ENCODE measurements at regions of chrX and their contacts with region 1.

Region 1: DNA sequence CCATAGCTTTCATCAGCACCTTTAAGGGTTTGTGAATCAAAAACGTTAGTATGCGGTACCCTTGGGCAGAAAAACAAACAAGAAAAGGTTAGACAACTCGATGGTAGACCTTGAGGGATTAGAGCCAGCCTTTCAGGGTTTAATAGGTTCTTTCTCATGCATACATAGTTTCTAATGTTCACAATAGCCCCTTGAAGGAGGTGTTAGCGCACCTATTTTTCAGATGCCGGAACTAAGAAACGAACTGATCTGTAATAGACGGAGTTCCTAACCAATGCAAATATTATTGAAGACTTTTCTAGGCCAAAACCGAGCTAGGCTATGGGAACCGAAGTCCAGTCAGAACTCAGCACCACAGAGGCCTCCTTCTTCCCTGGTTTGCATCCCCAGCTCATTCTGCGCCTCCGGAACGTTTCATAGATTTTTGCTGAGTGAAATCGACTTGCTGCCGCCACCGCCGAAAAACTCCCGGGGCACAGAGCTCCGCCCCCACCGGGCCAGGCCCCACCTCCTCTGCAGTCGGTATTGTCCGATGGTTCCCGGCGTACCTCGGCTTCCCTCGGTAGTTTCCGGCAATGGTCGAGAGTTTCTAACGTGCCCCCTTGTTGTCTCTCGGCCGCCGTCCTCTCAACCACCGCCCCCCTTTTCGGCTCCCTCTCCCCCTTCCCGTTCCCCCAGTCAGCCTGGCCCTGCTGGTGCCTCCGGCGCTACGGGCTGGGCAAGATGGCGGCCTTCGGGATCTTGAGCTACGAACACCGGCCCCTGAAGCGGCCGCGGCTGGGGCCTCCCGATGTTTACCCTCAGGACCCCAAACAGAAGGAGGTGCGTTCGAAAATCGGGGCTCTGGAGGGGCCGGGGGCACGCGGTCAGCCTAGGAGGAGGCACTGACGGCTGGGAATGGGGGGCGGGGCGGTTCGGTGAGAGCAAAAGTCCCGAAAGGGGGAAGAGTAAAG is at the start of gene MED12:
- DNase-seq: peak; percentile 91
- ATAC-seq: peak; percentile 98
- H3K4me3 Mint-ChIP-seq: peak within 1 kb of the TSS; percentile 79
- H3K27ac Mint-ChIP-seq: peak within 1 kb of the TSS; percentile 87
- H3K4me1 Mint-ChIP-seq: peaks cover 23% of the 10 kb centered on the region
- H3K27me3 Mint-ChIP-seq: no peaks in the 10 kb centered on the region
- total RNA-seq, gene MED12: 46.2 to 56.4 TPM

Region 2: GRCh38 chrX:70289793-70290776 is 828.2 kb before region 1 on chrX and contains the starts of genes KIF4A and PDZD11:
- CTCF ChIA-PET with region 1: no interaction called
- POLR2A ChIA-PET with region 1: no interaction called
- intact Hi-C with region 1: loop called in 1 of 2 experiments (anchors 2 kb)
- DNase-seq: peak; percentile 89
- ATAC-seq: peak; percentile 100
- H3K4me3 Mint-ChIP-seq: peak within 1 kb of the TSS; percentile 88
- H3K27ac Mint-ChIP-seq: peak within 1 kb of the TSS; percentile 82
- H3K4me1 Mint-ChIP-seq: peaks cover 18% of the 10 kb centered on the region
- H3K27me3 Mint-ChIP-seq: no peaks in the 10 kb centered on the region
- total RNA-seq, gene KIF4A: 21.2 to 25.4 TPM
- total RNA-seq, gene PDZD11: 23.6 to 28.0 TPM

Region 3: DNA sequence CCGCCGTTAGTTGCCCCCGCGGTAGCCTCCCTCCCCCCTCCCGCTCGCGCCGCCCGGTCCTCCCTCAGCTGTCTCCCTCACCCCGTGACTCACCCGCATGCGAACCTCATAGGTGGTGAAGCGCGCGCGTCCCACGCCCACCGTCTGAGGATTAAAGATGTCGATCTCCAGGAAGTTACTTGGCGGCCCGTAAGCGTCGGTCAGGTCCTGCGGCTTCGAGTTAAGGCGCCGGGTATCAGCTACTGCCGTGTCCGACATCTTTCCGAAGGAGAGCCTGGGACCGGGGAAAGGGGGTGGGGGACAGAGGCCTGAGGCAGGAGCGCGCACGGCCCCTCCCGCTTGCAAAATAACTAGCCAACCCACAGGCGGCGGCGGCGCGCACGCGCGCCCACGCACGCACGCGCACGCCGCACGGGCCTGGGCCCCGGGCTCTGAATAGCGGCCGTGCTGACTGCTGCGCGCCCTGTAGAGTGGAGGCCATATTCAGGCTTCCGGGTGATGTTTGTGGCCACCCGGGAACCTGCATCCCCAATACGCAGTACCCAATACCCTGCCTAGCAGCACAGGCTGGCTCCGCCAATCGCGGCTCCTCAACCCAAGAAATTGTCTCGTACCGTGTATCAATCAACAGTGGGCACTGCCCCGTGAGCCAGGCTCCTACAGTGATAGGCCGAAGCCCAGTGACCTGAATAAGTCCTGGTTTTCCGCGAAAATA is 50.1 kb before region 1 on chrX and contains the start of gene SNX12:
- CTCF ChIA-PET with region 1: no interaction called
- POLR2A ChIA-PET with region 1: interaction called, 6 read pairs
- intact Hi-C with region 1: loop called (anchors 1 to 5 kb)
- DNase-seq: peak; percentile 92
- ATAC-seq: peak; percentile 93
- H3K4me3 Mint-ChIP-seq: peak within 1 kb of the TSS; percentile 91
- H3K27ac Mint-ChIP-seq: peak within 1 kb of the TSS; percentile 93
- H3K4me1 Mint-ChIP-seq: peaks cover 17% of the 10 kb centered on the region
- H3K27me3 Mint-ChIP-seq: no peaks in the 10 kb centered on the region
- total RNA-seq, gene SNX12: 43.2 to 44.6 TPM

Region 4: DNA sequence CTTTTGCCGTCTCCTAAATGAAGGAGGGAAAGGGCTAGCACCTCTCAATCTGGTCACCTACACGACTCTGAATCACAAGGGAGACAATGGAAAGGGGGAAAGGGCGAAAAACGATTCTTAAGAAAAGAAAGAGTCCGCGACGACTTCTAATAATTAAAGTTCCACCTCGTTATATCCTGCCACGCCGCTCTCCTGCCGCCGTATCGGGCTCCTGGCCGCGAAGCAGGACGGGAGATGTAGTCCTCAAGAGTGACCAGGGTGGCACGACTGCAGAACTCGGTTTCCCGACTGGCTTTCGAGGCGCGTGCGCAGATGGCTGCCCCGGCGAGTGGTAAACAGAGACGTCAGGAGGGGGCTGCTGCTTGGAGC is 22.8 kb before region 1 on chrX and contains the start of gene FOXO4:
- CTCF ChIA-PET with region 1: interaction called, 10 read pairs
- POLR2A ChIA-PET with region 1: interaction called, 6 read pairs
- intact Hi-C with region 1: loop called in 1 of 2 experiments (anchors 1 kb)
- DNase-seq: peak; percentile 92
- ATAC-seq: peak; percentile 93
- H3K4me3 Mint-ChIP-seq: peak within 1 kb of the TSS; percentile 89
- H3K27ac Mint-ChIP-seq: peak within 1 kb of the TSS; percentile 83
- H3K4me1 Mint-ChIP-seq: peaks cover 27% of the 10 kb centered on the region
- H3K27me3 Mint-ChIP-seq: no peaks in the 10 kb centered on the region
- total RNA-seq, gene FOXO4: 9.5 to 10.8 TPM

Region 5: GRCh38 chrX:71100620-71101510 is 17.4 kb before region 1 on chrX:
- CTCF ChIA-PET with region 1: interaction called, 10 read pairs
- POLR2A ChIA-PET with region 1: interaction called, 6 read pairs
- intact Hi-C with region 1: loop called in 1 of 2 experiments (anchors 1 kb)
- DNase-seq: peak; percentile 50
- ATAC-seq: no peak
- H3K4me3 Mint-ChIP-seq: no peak overlapping the region
- H3K27ac Mint-ChIP-seq: peak overlapping the region; percentile 25
- H3K4me1 Mint-ChIP-seq: peaks cover 73% of the 10 kb centered on the region
- H3K27me3 Mint-ChIP-seq: no peaks in the 10 kb centered on the region